B cell (primary cell): ENCODE measurements at regions of chr12 and their contacts with region 1.

Region 1: GRCh38 chr12:96445691-96446583 is 43.4 kb upstream of the CFAP54 start:
- DNase-seq: peak; percentile 54
- ATAC-seq: peak; percentile 95
- H3K4me3 ChIP-seq: peak overlapping the region in 1 of 5 experiments; percentile 27
- H3K4me3 Mint-ChIP-seq: peak overlapping the region; percentile 23
- H3K27ac ChIP-seq: peak overlapping the region; percentile 51 to 77
- H3K27ac Mint-ChIP-seq: peak overlapping the region; percentile 82
- H3K4me1 ChIP-seq: peaks cover 13 to 14% of the 10 kb centered on the region in 2 donors
- H3K4me1 Mint-ChIP-seq: peaks cover 15% of the 10 kb centered on the region
- H3K27me3 ChIP-seq: no peaks in the 10 kb centered on the region
- H3K27me3 Mint-ChIP-seq: no peaks in the 10 kb centered on the region
- CTCF ChIP-seq: no peak

Region 2: DNA sequence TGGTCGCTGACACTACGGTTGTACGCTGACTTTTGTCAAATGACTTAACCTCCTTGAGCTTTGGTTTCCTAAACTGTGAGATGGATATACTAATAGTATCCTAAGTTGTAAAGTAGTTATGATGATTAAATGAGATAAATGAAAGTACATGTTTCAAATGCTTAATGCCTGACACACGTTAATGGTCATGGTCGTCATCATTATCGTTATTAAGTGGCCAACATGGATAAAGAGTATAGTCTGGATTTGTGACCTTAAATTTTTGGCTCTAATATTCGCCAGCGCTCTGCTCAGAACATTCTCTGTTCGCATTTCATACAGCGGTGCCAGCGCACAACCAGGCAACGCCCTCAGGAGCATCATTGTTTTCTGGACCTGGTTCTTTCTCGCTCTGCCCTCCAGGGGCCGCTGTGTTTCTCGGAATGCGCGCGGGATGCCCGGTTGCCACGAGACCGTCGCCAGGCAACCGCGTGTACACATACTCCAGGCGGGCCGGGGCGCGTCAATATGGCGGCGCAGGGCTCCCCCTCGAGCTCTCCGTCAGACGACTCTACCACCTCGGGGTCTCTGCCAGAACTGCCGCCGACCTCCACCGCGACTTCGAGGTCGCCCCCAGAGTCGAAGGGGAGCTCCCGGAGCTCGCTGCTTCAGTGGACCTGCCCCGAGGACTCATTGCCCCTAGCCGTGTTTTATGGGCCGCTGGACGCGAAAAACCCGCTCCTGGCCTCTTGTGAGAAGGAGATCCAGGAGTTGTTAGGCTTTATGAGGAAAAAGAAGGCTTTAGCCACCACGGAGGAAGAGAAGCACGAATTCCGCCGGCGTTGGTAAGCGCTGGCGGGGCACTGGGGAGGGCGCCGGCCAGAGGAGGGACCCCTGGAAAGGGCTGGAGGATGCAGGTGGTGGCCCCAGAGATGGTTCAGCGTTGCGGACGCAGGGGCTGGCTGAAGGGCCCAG is 43.4 kb after region 1 on chr12 and contains the start of gene CFAP54:
- CTCF ChIA-PET with region 1: interaction called, 5 read pairs
- POLR2A ChIA-PET with region 1: no interaction called
- intact Hi-C with region 1: loop called (anchors 5 kb)
- DNase-seq: peak; percentile 96
- ATAC-seq: peak; percentile 91
- H3K4me3 ChIP-seq: peak within 1 kb of the TSS; percentile 35 to 75 (median 67)
- H3K4me3 Mint-ChIP-seq: peak within 1 kb of the TSS; percentile 90
- H3K27ac ChIP-seq: peak within 1 kb of the TSS in 1 of 2 donors; percentile 69
- H3K27ac Mint-ChIP-seq: peak within 1 kb of the TSS; percentile 86
- H3K4me1 ChIP-seq: peaks cover 8 to 10% of the 10 kb centered on the region in 2 donors
- H3K4me1 Mint-ChIP-seq: peaks cover 16% of the 10 kb centered on the region
- H3K27me3 ChIP-seq: peaks cover 0 to 6% (median 3%) of the 10 kb centered on the region in 4 experiments
- H3K27me3 Mint-ChIP-seq: no peaks in the 10 kb centered on the region
- CTCF ChIP-seq: peak; percentile 89
- total RNA-seq, gene CFAP54: 0.24 and 0.76 TPM in 2 replicates

Region 3: DNA sequence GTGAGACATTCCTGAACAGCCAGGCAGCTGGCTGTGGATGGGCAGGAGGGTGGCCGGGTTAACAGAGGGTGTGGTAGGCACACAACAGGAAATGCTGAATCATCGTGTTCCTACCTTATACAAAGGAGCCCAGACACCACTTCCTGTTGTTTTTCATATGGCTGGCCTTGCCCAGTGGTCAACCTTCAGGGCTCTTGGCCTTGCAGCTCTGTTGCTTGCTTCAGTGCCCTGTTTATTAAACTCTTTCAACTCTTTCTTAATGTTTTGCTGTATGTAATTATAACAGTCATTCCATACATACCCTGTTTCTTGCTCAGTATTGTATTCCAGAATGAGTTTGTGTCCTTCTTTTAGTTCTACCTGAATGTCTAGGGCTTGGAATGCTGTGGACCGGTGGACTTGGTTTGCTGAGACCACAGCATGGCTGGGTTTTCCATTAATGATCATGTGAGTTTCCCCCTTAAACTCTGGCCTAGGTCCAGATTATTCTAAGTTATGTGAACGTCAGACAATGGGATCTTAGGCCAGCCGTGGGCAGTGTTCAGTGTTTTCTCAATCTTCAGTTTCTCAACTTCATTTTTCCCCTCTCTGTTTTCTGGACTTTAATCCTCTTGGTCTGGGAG is 55.3 kb after region 1 on chr12:
- CTCF ChIA-PET with region 1: no interaction called
- POLR2A ChIA-PET with region 1: no interaction called
- intact Hi-C with region 1: no loop called
- DNase-seq: no peak
- ATAC-seq: peak; percentile 70
- H3K4me3 ChIP-seq: peak overlapping the region in 1 of 5 experiments; percentile 3
- H3K4me3 Mint-ChIP-seq: peak overlapping the region; percentile 24
- H3K27ac ChIP-seq: peak overlapping the region; percentile 15 to 38
- H3K27ac Mint-ChIP-seq: peak overlapping the region; percentile 32
- H3K4me1 ChIP-seq: peaks cover 20 to 24% of the 10 kb centered on the region in 2 donors
- H3K4me1 Mint-ChIP-seq: peaks cover 27% of the 10 kb centered on the region
- H3K27me3 ChIP-seq: no peaks in the 10 kb centered on the region
- H3K27me3 Mint-ChIP-seq: no peaks in the 10 kb centered on the region
- CTCF ChIP-seq: no peak